H1 (cell line): ENCODE measurements at regions of chr16 and their contacts with region 1.

Region 1: DNA sequence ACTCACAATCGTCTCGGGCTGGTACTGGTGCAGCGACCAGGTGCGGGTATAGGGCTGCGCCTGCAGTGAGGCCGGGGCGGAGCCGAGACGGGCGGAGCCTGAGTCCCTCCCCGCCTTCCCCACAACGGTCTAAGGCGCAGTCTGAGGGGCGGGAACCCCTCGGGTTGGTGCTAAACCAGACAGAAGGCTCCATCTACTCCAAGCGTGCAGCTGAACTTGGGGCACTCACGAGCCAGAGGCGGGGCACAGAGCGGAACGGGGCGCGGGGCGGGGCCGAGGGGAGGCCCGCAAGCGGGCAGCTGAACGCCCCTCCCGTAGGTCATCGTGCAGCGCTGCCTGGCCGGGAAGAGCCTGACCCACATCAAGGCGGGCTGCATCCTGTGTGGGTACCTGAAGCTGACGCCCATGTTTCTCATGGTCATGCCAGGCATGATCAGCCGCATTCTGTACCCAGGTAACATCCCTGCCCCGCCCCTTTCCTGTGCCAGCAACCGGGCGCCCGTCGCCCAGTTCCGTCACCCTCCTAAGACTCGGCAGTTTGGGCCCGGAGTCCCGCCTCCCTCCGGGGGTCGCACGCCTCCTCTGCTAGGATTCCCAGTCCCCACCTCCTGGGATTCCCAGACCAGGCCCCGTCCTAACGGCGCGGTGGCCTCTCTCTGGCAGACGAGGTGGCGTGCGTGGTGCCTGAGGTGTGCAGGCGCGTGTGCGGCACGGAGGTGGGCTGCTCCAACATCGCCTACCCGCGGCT is 5.0 kb downstream of the SLC5A2 start:
- DNase-seq: peak in 1 of 2 experiments; percentile 87
- H3K4me3 ChIP-seq: peak overlapping the region; percentile 44 to 64 (median 54)
- H3K27ac ChIP-seq: no peak overlapping the region
- H3K4me1 ChIP-seq: peaks cover 0 to 8% (median 5%) of the 10 kb centered on the region in 4 experiments; a peak in 5 of 7 replicates
- H3K27me3 ChIP-seq: peaks cover 14 to 54% (median 42%) of the 10 kb centered on the region in 4 experiments
- CTCF ChIP-seq: no peak
- EP300 ChIP-seq: no peak
- POLR2A ChIP-seq: peak in 1 of 2 experiments; percentile 5; a peak in 1 of 3 replicates
- RAD21 ChIP-seq: no peak

Region 2: GRCh38 chr16:31382485-31383161 is 105.3 kb before region 1 on chr16:
- CTCF ChIA-PET with region 1: no interaction called
- POLR2A ChIA-PET with region 1: no interaction called
- DNase-seq: peak; percentile 33 to 88
- H3K4me3 ChIP-seq: no peak overlapping the region; a peak in 1 of 8 replicates
- H3K27ac ChIP-seq: no peak overlapping the region
- H3K4me1 ChIP-seq: peaks cover 0 to 1% (median 0%) of the 10 kb centered on the region in 4 experiments; a peak in 2 of 7 replicates
- H3K27me3 ChIP-seq: no peaks in the 10 kb centered on the region
- CTCF ChIP-seq: peak; percentile 86 to 96 (median 88)
- EP300 ChIP-seq: no peak
- POLR2A ChIP-seq: no peak
- RAD21 ChIP-seq: peak; percentile 84 to 87

Region 3: DNA sequence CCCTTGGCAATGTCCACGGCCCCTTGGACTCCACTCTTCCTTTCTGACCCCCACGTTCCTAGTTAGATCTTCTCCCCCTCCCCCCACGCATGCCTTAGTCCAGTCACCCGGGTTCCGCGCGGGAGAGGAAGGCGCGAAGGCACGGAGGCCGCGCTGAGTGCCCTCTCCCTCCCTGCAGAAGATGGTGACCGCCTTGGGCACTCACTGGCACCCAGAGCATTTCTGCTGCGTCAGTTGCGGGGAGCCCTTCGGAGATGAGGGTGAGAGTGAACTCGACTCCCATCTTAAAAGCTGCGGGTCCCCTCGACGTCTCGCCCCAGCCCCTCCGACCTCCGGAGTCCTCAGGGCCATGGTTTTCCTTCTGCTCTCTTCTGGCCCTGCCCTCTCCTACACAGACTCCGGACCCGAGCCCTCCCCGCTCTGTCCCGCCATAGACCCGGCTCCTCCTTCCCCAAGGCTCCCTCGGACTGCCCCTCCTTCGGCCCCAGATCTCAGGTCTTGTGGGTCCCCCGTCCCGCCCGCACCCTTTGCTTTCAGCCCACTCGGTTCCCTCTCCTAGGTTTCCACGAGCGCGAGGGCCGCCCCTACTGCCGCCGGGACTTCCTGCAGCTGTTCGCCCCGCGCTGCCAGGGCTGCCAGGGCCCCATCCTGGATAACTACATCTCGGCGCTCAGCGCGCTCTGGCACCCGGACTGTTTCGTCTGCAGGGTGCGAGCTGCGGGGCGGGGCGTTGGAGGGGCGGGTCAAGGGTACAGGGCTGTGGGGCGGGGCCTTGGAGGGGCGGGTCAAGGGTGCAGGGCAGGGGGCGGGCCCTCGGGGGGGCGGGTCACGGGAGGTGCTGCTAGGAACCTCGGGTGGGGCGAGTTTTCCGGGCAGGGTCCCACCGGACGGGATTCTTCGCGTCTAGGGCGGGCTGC is 11.3 kb before region 1 on chr16:
- CTCF ChIA-PET with region 1: interaction called, 12 read pairs
- POLR2A ChIA-PET with region 1: interaction called, 31 read pairs
- DNase-seq: peak in 1 of 2 experiments; percentile 86
- H3K4me3 ChIP-seq: peak overlapping the region; percentile 54 to 79 (median 64)
- H3K27ac ChIP-seq: no peak overlapping the region
- H3K4me1 ChIP-seq: peaks cover 0 to 8% (median 3%) of the 10 kb centered on the region in 4 experiments; a peak in 5 of 7 replicates
- H3K27me3 ChIP-seq: peaks cover 2 to 49% (median 35%) of the 10 kb centered on the region in 4 experiments
- CTCF ChIP-seq: no peak
- EP300 ChIP-seq: no peak
- POLR2A ChIP-seq: peak in 1 of 2 experiments; percentile 77; a peak in 2 of 3 replicates
- RAD21 ChIP-seq: no peak

Region 4: DNA sequence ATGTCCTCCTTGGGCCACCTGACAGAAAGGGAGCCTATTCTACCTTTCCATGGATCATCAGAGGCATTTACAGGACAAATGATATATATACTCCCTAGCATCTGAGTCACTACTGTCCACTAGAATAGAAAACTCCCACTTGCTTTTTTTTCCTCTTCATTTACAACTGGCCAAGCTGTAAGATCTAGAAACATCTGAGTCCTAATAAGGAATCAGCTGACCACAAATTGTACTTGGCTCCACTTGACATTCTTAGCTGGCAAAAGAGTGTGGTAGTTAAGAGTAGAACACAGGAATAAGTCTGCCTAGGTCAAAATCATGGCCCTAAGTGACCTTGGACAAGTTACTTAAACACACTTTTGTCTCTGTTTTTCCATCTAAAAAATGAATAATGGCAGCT is 15.1 kb after region 1 on chr16:
- CTCF ChIA-PET with region 1: interaction called, 7 read pairs
- POLR2A ChIA-PET with region 1: interaction called, 69 read pairs
- DNase-seq: no peak
- H3K4me3 ChIP-seq: no peak overlapping the region
- H3K27ac ChIP-seq: no peak overlapping the region
- H3K4me1 ChIP-seq: peaks cover 2 to 10% (median 7%) of the 10 kb centered on the region in 4 experiments
- H3K27me3 ChIP-seq: no peaks in the 10 kb centered on the region
- CTCF ChIP-seq: no peak
- EP300 ChIP-seq: no peak
- POLR2A ChIP-seq: no peak
- RAD21 ChIP-seq: no peak

Region 5: GRCh38 chr16:31713071-31713944 is 225.4 kb after region 1 on chr16:
- CTCF ChIA-PET with region 1: interaction called, 4 read pairs
- POLR2A ChIA-PET with region 1: interaction called, 17 read pairs
- DNase-seq: peak; percentile 88 to 93
- H3K4me3 ChIP-seq: peak overlapping the region; percentile 77 to 95 (median 92)
- H3K27ac ChIP-seq: peak overlapping the region; percentile 94
- H3K4me1 ChIP-seq: peaks cover 4 to 14% (median 5%) of the 10 kb centered on the region in 4 experiments; a peak in 6 of 7 replicates
- H3K27me3 ChIP-seq: no peaks in the 10 kb centered on the region
- CTCF ChIP-seq: no peak
- EP300 ChIP-seq: no peak
- POLR2A ChIP-seq: peak; percentile 94 to 96
- RAD21 ChIP-seq: no peak

Region 6: DNA sequence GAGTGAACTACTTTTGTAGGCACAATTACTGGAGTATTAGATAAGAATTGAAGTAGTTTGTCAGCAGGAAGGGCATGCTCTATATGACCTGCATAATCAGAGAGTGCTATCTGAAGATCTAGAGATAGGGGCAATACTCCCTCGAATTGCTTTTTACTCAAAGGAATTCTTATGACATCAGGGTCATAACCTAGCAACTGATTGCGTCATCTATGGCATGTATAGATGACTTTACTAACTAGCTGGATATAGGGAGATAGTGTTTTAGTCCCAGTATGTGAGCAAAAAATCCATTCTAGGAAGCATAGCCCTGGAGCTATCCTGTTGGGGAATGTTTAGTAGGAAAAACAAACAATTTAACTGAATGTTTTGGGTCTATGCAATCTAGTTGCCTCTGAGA is 276.2 kb after region 1 on chr16:
- CTCF ChIA-PET with region 1: no interaction called
- POLR2A ChIA-PET with region 1: no interaction called
- DNase-seq: no peak
- H3K4me3 ChIP-seq: no peak overlapping the region
- H3K27ac ChIP-seq: no peak overlapping the region
- H3K4me1 ChIP-seq: no peaks in the 10 kb centered on the region
- H3K27me3 ChIP-seq: no peaks in the 10 kb centered on the region
- CTCF ChIP-seq: no peak
- EP300 ChIP-seq: no peak
- POLR2A ChIP-seq: no peak
- RAD21 ChIP-seq: no peak